ENCODE measurements at regions of chr10 and their contacts with region 1.

Region 1: GRCh38 chr10:86899670-86900276 is 57.6 kb downstream of the MMRN2 start:
- DNase-seq: peak in 6 of 9 donors; percentile 10 to 32 (median 26)
- ATAC-seq: peak; percentile 46
- H3K4me3 ChIP-seq: no peak overlapping the region
- H3K4me3 Mint-ChIP-seq: no peak overlapping the region
- H3K27ac ChIP-seq: no peak overlapping the region
- H3K27ac Mint-ChIP-seq: no peak overlapping the region
- H3K4me1 ChIP-seq: no peaks in the 10 kb centered on the region
- H3K4me1 Mint-ChIP-seq: peaks cover 0 to 4% (median 0%) of the 10 kb centered on the region in 7 donors
- H3K27me3 ChIP-seq: no peaks in the 10 kb centered on the region
- H3K27me3 Mint-ChIP-seq: peaks cover 0 to 8% (median 0%) of the 10 kb centered on the region in 5 donors

Region 2: GRCh38 chr10:86693721-86694369 is 205.9 kb before region 1 on chr10:
- CTCF ChIA-PET with region 1: interaction called, 15 read pairs
- POLR2A ChIA-PET with region 1: no interaction called
- intact Hi-C with region 1: loop called (anchors 1 kb)
- DNase-seq: peak in 4 of 9 donors; percentile 13 to 37 (median 28)
- ATAC-seq: no peak
- H3K4me3 ChIP-seq: no peak overlapping the region
- H3K4me3 Mint-ChIP-seq: peak overlapping the region in 1 of 10 donors; percentile 10
- H3K27ac ChIP-seq: no peak overlapping the region
- H3K27ac Mint-ChIP-seq: peak overlapping the region in 2 of 9 donors; percentile 8 to 59
- H3K4me1 ChIP-seq: no peaks in the 10 kb centered on the region
- H3K4me1 Mint-ChIP-seq: peaks cover 0 to 12% (median 0%) of the 10 kb centered on the region in 7 donors
- H3K27me3 ChIP-seq: no peaks in the 10 kb centered on the region
- H3K27me3 Mint-ChIP-seq: peaks cover 0 to 4% (median 0%) of the 10 kb centered on the region in 5 donors

Region 3: GRCh38 chr10:86755740-86756510 is 143.8 kb before region 1 on chr10:
- CTCF ChIA-PET with region 1: no interaction called
- POLR2A ChIA-PET with region 1: no interaction called
- intact Hi-C with region 1: loop called in 1 of 2 experiments (anchors 5 kb)
- DNase-seq: peak; percentile 68 to 95 (median 82)
- ATAC-seq: peak; percentile 97
- H3K4me3 ChIP-seq: peak overlapping the region; percentile 73
- H3K4me3 Mint-ChIP-seq: peak overlapping the region; percentile 78 to 95 (median 86)
- H3K27ac ChIP-seq: peak overlapping the region; percentile 50
- H3K27ac Mint-ChIP-seq: peak overlapping the region in 4 of 9 donors; percentile 31 to 71 (median 50)
- H3K4me1 ChIP-seq: peaks cover 9 to 11% of the 10 kb centered on the region in 2 donors
- H3K4me1 Mint-ChIP-seq: peaks cover 13 to 47% (median 36%) of the 10 kb centered on the region in 7 donors
- H3K27me3 ChIP-seq: peaks cover 0 to 6% of the 10 kb centered on the region in 2 donors
- H3K27me3 Mint-ChIP-seq: peaks cover 24 to 52% (median 31%) of the 10 kb centered on the region in 5 donors